Activated CD4-positive, alpha-beta T cell treated with anti-CD3 and anti-CD28 coated beads for 36 hours (primary cell): ENCODE measurements at regions of chr16 and their contacts with region 1.

Region 1: DNA sequence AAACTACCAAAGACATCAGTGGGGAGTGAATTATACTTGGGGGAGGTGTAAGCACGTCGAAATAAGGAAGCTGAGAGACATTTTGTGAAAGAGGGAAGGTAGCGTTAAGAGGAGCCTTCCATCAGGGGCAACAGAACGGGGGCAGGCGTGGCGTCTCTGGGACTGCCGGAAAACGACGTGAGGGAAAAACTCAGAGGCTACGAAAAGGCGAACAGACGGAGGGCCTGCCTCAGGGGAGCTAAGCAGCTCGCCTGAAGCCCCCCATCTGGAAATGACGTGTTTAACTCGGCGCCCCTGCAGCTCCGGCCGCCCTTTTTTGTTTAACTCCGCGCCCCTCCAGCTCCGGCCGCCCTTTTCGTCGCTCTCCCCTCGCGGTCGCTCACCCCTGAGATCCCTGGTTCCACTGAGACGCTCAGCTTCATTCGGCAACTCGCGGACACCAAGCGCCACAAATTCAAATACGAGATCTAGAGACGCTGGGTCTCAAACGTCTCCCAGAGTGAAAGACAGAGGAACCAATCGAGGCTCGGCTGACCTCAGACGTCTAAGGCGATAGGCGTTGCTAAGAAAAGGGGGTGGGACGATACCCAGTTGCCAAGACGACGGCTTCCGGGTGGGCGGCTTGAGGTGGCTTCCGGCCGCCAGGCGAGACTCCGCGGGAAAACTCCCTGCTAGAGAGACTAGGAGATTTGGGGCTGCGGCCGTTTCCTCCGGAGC is 383.3 kb downstream of the ZFHX3 start:
- DNase-seq: peak; percentile 97
- ATAC-seq: peak; percentile 100
- H3K4me3 Mint-ChIP-seq: peak overlapping the region; percentile 99
- H3K27ac Mint-ChIP-seq: peak overlapping the region; percentile 96
- H3K4me1 Mint-ChIP-seq: peaks cover 13% of the 10 kb centered on the region
- H3K27me3 Mint-ChIP-seq: peaks cover 4% of the 10 kb centered on the region

Region 2: DNA sequence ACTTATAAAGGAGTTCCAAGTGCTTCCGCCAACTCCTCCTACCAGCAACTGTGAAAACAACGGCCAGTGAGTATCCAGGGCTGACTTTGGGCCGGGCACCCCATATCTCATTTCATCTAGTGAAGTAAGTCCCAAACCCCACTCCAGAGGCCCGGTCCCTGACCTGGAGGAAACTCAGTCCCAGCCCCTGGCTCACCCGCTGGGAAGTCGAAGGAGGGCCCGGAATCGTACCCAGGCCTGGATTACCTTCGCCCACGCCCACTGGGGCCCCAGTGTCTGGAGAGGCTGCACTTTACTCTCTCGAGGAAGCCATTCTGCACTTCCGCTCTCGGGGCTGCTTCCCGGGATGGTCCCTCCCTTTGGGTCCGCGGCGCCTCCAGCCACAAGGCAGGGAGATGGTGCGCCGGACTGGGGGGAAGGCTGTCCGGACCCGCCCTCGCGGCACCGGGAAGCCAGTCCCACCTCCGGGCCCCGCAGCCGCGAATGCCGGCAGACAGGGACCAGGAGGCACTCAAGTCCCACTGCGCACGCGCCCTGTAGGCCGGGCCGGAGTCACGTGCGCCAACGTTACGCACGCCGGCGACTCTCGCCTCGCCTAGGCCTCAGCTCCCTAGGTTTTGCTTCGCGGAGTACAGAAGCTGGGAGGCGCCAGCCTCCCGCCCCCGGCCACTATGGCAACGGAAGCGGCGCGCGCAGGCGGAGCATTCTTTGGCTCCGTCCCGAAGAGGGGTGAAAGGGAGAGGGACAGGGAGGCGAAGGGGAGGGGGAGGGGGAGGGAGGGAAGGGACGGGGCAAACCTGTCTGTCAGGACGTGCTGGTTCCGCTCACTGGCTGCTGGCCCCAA is 1375.6 kb before region 1 on chr16 and contains the start of gene CMTR2:
- CTCF ChIA-PET with region 1: no interaction called
- POLR2A ChIA-PET with region 1: no interaction called
- intact Hi-C with region 1: loop called in 1 of 2 experiments (anchors 5 kb)
- DNase-seq: peak; percentile 95
- ATAC-seq: peak; percentile 97
- H3K4me3 Mint-ChIP-seq: peak within 1 kb of the TSS; percentile 83
- H3K27ac Mint-ChIP-seq: peak within 1 kb of the TSS; percentile 90
- H3K4me1 Mint-ChIP-seq: peaks cover 15% of the 10 kb centered on the region
- H3K27me3 Mint-ChIP-seq: peaks cover 16% of the 10 kb centered on the region
- total RNA-seq, gene CMTR2: 15.8 to 16.5 TPM

Region 3: DNA sequence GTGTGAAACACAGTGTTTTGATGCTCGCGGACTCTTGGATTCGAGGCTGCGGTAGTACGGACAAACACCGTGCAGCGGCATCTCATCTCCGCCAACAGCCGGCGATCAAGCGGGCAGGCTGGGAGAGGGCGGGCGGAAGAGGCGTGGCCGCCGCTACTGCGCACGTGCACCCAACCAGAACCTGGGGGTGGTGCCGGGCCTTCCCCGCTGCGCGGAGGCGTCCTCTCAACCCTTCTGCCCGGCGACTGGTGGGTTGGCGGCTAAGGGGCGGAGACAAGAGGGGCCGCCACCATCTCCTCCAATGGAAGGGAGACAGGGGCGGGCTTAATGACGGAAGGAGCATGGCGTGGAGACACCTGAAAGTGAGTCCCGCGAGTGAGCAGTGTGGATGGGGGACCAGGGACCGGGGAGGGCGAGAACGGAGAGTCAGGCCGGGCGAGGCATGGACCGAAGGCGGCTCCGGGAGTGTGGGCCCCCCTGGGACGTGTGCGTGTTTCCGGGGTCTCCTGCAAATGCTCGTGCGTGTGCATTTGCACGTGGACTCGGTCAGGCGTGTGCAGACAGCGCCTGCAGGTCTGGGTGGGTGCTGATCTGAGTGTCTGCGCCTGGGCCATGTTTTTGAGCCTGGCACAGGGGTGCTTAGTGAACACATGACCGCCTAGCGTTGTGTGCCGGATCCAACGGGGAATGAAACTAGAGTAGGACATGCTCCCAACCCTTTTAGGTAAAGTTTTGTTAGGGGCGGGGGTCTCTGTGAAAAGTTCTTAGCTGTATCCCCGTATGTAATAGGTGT is 656.0 kb before region 1 on chr16 and contains the start of gene DHODH:
- CTCF ChIA-PET with region 1: no interaction called
- POLR2A ChIA-PET with region 1: no interaction called
- intact Hi-C with region 1: loop called in 1 of 2 experiments (anchors 10 kb)
- DNase-seq: peak; percentile 99
- ATAC-seq: peak; percentile 99
- H3K4me3 Mint-ChIP-seq: peak within 1 kb of the TSS; percentile 94
- H3K27ac Mint-ChIP-seq: peak within 1 kb of the TSS; percentile 96
- H3K4me1 Mint-ChIP-seq: peaks cover 21% of the 10 kb centered on the region
- H3K27me3 Mint-ChIP-seq: no peaks in the 10 kb centered on the region
- total RNA-seq, gene DHODH: 15.5 to 21.4 TPM

Region 4: DNA sequence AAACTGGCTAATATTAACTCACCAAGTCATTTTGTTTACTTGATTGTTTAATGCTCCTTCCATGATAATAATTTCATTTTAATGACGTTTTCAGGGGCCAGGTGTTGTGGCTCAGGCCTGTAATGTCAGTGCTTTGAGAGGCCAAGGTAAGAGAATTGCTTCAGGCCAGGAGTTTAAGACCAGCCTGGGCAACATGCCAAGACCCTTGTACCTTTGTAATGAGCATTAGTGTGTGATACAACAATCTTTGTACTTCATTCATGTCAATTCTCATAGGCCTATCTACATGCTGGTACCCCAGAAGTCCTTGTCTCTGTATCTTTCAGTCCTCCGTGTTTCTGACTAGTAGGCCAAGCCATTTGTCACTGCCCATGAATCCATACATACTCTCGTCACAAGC is 86.4 kb after region 1 on chr16:
- CTCF ChIA-PET with region 1: no interaction called
- POLR2A ChIA-PET with region 1: no interaction called
- intact Hi-C with region 1: no loop called
- DNase-seq: no peak
- ATAC-seq: no peak
- H3K4me3 Mint-ChIP-seq: no peak overlapping the region
- H3K27ac Mint-ChIP-seq: no peak overlapping the region
- H3K4me1 Mint-ChIP-seq: no peaks in the 10 kb centered on the region
- H3K27me3 Mint-ChIP-seq: no peaks in the 10 kb centered on the region

Region 5: GRCh38 chr16:72787514-72788268 is 123.0 kb after region 1 on chr16:
- CTCF ChIA-PET with region 1: no interaction called
- POLR2A ChIA-PET with region 1: no interaction called
- intact Hi-C with region 1: loop called in 1 of 2 experiments (anchors 1 kb)
- DNase-seq: peak; percentile 84
- ATAC-seq: peak; percentile 97
- H3K4me3 Mint-ChIP-seq: peak overlapping the region; percentile 65
- H3K27ac Mint-ChIP-seq: peak overlapping the region; percentile 40
- H3K4me1 Mint-ChIP-seq: peaks cover 17% of the 10 kb centered on the region
- H3K27me3 Mint-ChIP-seq: peaks cover 28% of the 10 kb centered on the region

Region 6: DNA sequence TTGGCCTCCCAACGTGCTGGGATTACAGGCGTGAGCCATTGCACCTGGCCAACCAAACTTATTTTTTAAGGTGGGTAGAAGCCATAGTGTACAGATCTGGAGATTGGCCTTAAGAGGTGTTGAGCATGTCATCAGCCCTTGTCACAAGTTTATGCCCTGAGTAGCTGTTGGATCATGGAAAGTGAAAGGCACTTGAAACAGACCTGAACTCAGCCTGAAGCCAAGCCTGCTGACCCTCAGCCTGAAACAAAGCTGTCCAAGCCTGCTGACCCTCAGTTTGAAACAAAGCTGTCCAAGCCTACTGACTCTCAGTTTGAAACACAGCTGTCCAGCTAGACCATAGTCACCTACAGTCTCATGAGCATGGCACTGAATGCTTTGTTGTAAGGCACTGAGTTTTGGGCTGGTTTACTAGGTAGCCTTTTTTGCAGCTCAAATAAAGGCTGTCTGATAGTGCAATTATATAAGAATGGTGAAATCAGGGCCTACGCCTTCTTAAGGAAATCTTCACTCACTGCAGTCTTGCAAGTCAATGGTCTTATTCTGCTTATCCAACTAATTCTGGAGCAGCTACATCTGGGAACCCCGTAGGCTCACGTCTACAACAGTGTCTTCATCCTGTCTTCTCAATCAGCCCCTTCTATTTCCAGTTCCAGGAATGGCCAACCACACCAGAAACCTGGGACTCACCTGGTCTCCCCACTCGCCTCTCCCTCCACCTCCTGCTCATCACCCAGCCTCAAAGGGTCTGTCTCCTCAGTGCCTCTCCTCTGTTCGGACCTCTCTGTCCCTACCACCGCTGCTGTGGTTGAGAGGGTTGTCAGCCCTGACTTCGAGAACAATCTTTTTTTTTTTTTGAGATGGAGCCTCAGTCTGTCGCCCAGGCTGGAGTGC is 1708.5 kb after region 1 on chr16:
- CTCF ChIA-PET with region 1: no interaction called
- POLR2A ChIA-PET with region 1: interaction called, 6 read pairs
- intact Hi-C with region 1: loop called in 1 of 2 experiments (anchors 10 kb)
- DNase-seq: no peak
- ATAC-seq: no peak
- H3K4me3 Mint-ChIP-seq: no peak overlapping the region
- H3K27ac Mint-ChIP-seq: no peak overlapping the region
- H3K4me1 Mint-ChIP-seq: no peaks in the 10 kb centered on the region
- H3K27me3 Mint-ChIP-seq: no peaks in the 10 kb centered on the region